ENCODE measurements at regions of chr3 and their contacts with region 1.

Region 1: DNA sequence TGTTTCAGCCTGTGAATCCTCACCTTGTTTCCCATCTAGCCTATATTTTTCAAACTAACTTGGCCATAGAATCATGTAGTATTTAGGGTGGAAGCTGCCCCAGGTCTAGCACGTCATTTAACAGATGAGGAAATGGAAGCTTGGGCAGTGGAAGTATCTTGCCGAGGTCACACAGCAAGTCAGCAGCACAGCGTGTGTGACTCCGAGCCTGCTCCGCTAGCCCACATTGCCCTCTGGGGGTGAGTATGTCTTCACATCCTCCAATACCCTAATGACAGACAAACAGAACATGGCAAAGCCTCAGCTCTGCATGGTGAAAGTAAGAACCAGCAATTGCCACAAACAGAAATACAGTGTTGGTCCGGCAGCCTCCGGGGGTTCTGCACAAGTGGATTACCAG is 2.2 kb upstream of the CCR5 start:
- DNase-seq: peak; percentile 33 to 83 (median 57)
- ATAC-seq: peak; percentile 77 to 84 (median 82)
- H3K4me3 ChIP-seq: no peak overlapping the region
- H3K4me3 Mint-ChIP-seq: peak overlapping the region; percentile 8 to 28 (median 18)
- H3K27ac ChIP-seq: peak overlapping the region; percentile 74
- H3K27ac Mint-ChIP-seq: peak overlapping the region; percentile 33 to 84
- H3K4me1 ChIP-seq: peaks cover 18 to 51% of the 10 kb centered on the region in 2 experiments
- H3K4me1 Mint-ChIP-seq: peaks cover 34 to 69% (median 50%) of the 10 kb centered on the region in 3 donors
- H3K27me3 ChIP-seq: no peaks in the 10 kb centered on the region
- H3K27me3 Mint-ChIP-seq: no peaks in the 10 kb centered on the region

Region 2: GRCh38 chr3:46029953-46030543 is 338.5 kb before region 1 on chr3:
- CTCF ChIA-PET with region 1: no interaction called
- POLR2A ChIA-PET with region 1: no interaction called
- DNase-seq: no peak
- ATAC-seq: no peak
- H3K4me3 ChIP-seq: no peak overlapping the region
- H3K4me3 Mint-ChIP-seq: no peak overlapping the region
- H3K27ac ChIP-seq: no peak overlapping the region
- H3K27ac Mint-ChIP-seq: no peak overlapping the region
- H3K4me1 ChIP-seq: no peaks in the 10 kb centered on the region
- H3K4me1 Mint-ChIP-seq: peaks cover 0 to 4% (median 0%) of the 10 kb centered on the region in 3 donors
- H3K27me3 ChIP-seq: no peaks in the 10 kb centered on the region
- H3K27me3 Mint-ChIP-seq: no peaks in the 10 kb centered on the region

Region 3: GRCh38 chr3:46098319-46098761 is 270.2 kb before region 1 on chr3:
- CTCF ChIA-PET with region 1: interaction called in 1 of 2 experiments, 10 read pairs
- POLR2A ChIA-PET with region 1: no interaction called
- DNase-seq: peak in 16 of 35 experiments; percentile 11 to 58 (median 30)
- ATAC-seq: peak; percentile 88 to 94 (median 93)
- H3K4me3 ChIP-seq: no peak overlapping the region
- H3K4me3 Mint-ChIP-seq: peak overlapping the region; percentile 7 to 69 (median 46)
- H3K27ac ChIP-seq: peak overlapping the region; percentile 90
- H3K27ac Mint-ChIP-seq: peak overlapping the region; percentile 94 to 97
- H3K4me1 ChIP-seq: peaks cover 16 to 36% of the 10 kb centered on the region in 2 experiments
- H3K4me1 Mint-ChIP-seq: peaks cover 32 to 59% (median 38%) of the 10 kb centered on the region in 3 donors
- H3K27me3 ChIP-seq: no peaks in the 10 kb centered on the region
- H3K27me3 Mint-ChIP-seq: peaks cover 0 to 3% of the 10 kb centered on the region in 2 donors

Region 4: DNA sequence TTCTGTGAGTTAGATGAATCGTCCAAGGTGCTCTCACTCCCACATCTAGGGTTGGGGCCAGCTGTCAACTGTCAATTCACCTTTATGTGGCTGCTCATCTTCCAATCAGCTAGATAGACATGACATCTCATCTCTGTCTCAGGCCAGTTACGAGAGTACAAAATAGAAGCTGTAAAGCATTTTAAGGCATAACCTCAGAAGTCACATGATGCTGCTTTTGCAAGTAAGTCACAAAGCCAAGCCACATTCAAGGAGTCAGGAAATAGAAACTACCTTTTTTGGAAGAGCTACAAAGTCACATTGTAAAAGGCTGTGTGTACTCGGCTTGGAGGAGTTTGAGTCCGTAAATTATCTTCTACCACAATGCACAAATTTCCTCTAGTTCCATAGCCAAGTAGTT is 155.4 kb before region 1 on chr3:
- CTCF ChIA-PET with region 1: interaction called in 1 of 2 experiments, 12 read pairs
- POLR2A ChIA-PET with region 1: no interaction called
- DNase-seq: peak in 2 of 35 experiments; percentile 4 to 62
- ATAC-seq: peak; percentile 76 to 92 (median 82)
- H3K4me3 ChIP-seq: no peak overlapping the region
- H3K4me3 Mint-ChIP-seq: no peak overlapping the region
- H3K27ac ChIP-seq: peak overlapping the region; percentile 43
- H3K27ac Mint-ChIP-seq: no peak overlapping the region
- H3K4me1 ChIP-seq: peaks cover 12 to 32% of the 10 kb centered on the region in 2 experiments
- H3K4me1 Mint-ChIP-seq: peaks cover 11 to 16% (median 14%) of the 10 kb centered on the region in 3 donors
- H3K27me3 ChIP-seq: no peaks in the 10 kb centered on the region
- H3K27me3 Mint-ChIP-seq: no peaks in the 10 kb centered on the region

Region 5: GRCh38 chr3:46276502-46277099 is 92.0 kb before region 1 on chr3:
- CTCF ChIA-PET with region 1: interaction called, 9 to 139 read pairs
- POLR2A ChIA-PET with region 1: interaction called in 1 of 2 experiments, 3 read pairs
- DNase-seq: peak; percentile 37 to 85 (median 66)
- ATAC-seq: peak; percentile 74 to 86 (median 83)
- H3K4me3 ChIP-seq: no peak overlapping the region
- H3K4me3 Mint-ChIP-seq: no peak overlapping the region
- H3K27ac ChIP-seq: no peak overlapping the region
- H3K27ac Mint-ChIP-seq: peak overlapping the region in 1 of 2 donors; percentile 77
- H3K4me1 ChIP-seq: peaks cover 7 to 50% of the 10 kb centered on the region in 2 experiments
- H3K4me1 Mint-ChIP-seq: peaks cover 32 to 42% (median 40%) of the 10 kb centered on the region in 3 donors
- H3K27me3 ChIP-seq: no peaks in the 10 kb centered on the region
- H3K27me3 Mint-ChIP-seq: no peaks in the 10 kb centered on the region

Region 6: DNA sequence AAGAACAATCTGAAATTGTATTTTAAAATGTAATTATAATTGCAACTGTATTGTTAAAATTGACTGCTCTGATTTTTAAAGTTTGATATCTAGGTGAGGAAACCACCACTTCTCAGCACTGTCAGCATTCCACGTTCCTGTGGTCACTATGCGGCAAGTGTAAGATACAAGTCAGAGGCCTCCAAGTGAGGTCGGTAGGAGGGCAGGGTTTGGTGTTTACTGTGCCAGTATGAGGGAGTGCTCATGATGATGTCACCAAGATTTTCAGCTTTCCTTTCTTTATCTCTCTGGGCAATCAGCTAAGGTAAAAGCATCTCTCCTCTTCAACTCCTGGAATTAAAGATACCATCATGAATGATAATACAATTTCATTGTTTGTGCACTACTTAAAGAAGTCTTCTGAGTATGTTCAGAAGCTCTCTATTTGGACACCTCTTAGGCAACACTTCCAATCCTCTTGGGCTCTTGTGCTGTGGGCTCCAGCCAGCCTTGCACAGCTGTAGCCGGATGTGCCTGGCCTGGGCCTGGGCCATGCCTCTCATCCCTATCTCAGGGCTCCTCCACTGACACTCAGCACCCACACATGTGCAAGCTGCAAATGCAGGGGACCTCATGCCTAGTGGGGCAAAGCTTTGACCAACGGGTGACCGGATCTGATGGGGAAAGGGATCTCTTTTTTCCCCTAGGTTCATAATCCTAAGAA is 83.4 kb before region 1 on chr3:
- CTCF ChIA-PET with region 1: interaction called in 1 of 2 experiments, 26 read pairs
- POLR2A ChIA-PET with region 1: no interaction called
- DNase-seq: peak in 29 of 35 experiments; percentile 11 to 84 (median 37)
- ATAC-seq: peak; percentile 48 to 82 (median 54)
- H3K4me3 ChIP-seq: no peak overlapping the region
- H3K4me3 Mint-ChIP-seq: peak overlapping the region in 1 of 3 donors; percentile 7
- H3K27ac ChIP-seq: peak overlapping the region; percentile 85
- H3K27ac Mint-ChIP-seq: peak overlapping the region; percentile 76 to 80
- H3K4me1 ChIP-seq: peaks cover 11 to 76% of the 10 kb centered on the region in 2 experiments
- H3K4me1 Mint-ChIP-seq: peaks cover 46 to 77% (median 61%) of the 10 kb centered on the region in 3 donors
- H3K27me3 ChIP-seq: no peaks in the 10 kb centered on the region
- H3K27me3 Mint-ChIP-seq: no peaks in the 10 kb centered on the region